CD8-positive, alpha-beta T cell (primary cell): ENCODE measurements at regions of chr13 and their contacts with region 1.

Region 1: GRCh38 chr13:60267498-60268198 is 103.9 kb upstream of the DIAPH3 start:
- DNase-seq: peak in 8 of 9 experiments; percentile 3 to 69 (median 42)
- ATAC-seq: peak; percentile 91
- H3K4me3 ChIP-seq: peak overlapping the region; percentile 65 to 67
- H3K4me3 Mint-ChIP-seq: no peak overlapping the region
- H3K27ac ChIP-seq: peak overlapping the region; percentile 41 to 62
- H3K27ac Mint-ChIP-seq: no peak overlapping the region
- H3K4me1 ChIP-seq: peaks cover 9% of the 10 kb centered on the region
- H3K4me1 Mint-ChIP-seq: peaks cover 4% of the 10 kb centered on the region
- H3K27me3 ChIP-seq: no peaks in the 10 kb centered on the region
- H3K27me3 Mint-ChIP-seq: no peaks in the 10 kb centered on the region
- CTCF ChIP-seq: no peak

Region 2: DNA sequence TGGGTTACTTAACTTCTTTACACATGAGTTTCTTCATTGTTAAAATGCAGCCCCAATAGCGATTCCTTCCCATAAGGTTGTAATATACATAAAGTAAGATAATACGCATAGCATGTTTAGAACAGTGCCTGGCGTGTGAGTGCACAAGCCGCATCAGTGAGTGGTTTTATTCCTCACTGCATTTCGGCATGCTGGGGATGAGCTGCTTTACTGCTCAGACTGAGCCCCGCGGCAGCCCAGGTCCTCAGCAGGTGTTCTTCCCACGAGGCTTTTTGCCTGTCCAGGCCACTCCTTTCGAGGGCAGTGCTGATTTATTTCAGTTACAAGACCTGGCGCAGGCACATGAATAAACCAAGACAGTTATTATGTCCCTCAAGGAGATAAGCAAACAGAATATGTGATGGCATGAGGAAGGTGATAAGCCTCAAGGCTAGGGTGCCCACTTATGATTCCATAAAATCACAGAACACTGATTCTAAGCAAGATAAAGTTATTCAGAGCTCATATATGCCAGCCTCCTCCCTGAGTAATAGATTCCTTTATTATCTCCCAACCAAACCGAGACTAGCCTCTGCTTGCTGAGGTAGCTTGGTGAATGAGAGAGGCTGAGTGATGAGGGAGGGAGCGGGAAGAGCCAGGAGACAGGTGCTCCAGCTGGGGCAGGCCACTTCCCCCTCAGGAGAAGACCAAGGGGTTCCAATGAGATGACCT is 609.5 kb before region 1 on chr13:
- CTCF ChIA-PET with region 1: no interaction called
- POLR2A ChIA-PET with region 1: no interaction called
- intact Hi-C with region 1: no loop called
- DNase-seq: no peak
- ATAC-seq: no peak
- H3K4me3 ChIP-seq: no peak overlapping the region
- H3K4me3 Mint-ChIP-seq: no peak overlapping the region
- H3K27ac ChIP-seq: no peak overlapping the region
- H3K27ac Mint-ChIP-seq: no peak overlapping the region
- H3K4me1 ChIP-seq: no peaks in the 10 kb centered on the region
- H3K4me1 Mint-ChIP-seq: no peaks in the 10 kb centered on the region
- H3K27me3 ChIP-seq: no peaks in the 10 kb centered on the region
- H3K27me3 Mint-ChIP-seq: peaks cover 4% of the 10 kb centered on the region
- CTCF ChIP-seq: no peak

Region 3: DNA sequence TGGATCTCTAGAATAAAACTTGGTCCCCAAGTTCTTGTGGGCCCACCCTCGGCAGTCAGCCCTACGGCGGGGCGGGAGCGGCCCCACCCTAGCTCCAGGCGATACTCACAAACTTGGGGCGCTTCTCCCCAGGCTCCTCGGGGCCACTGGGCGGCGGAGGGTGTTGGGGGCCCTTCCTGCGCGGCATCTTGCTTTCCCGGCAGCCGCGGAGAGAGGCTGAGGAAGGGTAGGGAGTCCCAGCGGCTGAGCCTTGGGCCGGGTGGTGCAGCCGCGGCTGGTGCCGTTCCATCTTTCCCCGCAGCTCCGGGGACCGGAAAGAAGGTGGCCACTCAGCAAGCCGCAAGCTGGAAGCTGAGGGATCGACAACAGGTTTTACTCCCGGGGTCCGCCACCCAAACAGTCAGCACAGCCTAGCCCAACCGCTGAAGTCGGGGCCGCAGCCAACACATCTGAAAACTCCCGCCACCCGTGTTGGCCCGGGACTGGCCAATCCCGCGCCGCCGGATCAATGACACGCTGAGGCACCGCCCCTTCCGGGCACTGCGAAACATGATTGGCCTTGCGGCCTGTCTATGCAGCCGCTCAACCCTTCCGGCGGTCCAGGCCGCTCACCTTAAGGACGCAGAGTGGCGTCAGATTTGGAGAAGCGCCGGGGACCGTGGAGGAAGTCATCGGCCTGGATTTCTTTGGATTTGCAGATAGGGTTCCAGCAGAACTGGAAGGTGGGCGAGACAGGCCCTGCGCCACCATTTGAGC is 104.0 kb before region 1 on chr13 and contains the start of gene DIAPH3:
- CTCF ChIA-PET with region 1: no interaction called
- POLR2A ChIA-PET with region 1: no interaction called
- intact Hi-C with region 1: loop called in 1 of 2 experiments (anchors 5 kb)
- DNase-seq: peak; percentile 84 to 94 (median 92)
- ATAC-seq: peak; percentile 99
- H3K4me3 ChIP-seq: peak within 1 kb of the TSS; percentile 77 to 95
- H3K4me3 Mint-ChIP-seq: peak within 1 kb of the TSS; percentile 95
- H3K27ac ChIP-seq: peak within 1 kb of the TSS; percentile 70 to 89
- H3K27ac Mint-ChIP-seq: peak within 1 kb of the TSS; percentile 95
- H3K4me1 ChIP-seq: peaks cover 16% of the 10 kb centered on the region
- H3K4me1 Mint-ChIP-seq: peaks cover 24% of the 10 kb centered on the region
- H3K27me3 ChIP-seq: no peaks in the 10 kb centered on the region
- H3K27me3 Mint-ChIP-seq: peaks cover 9% of the 10 kb centered on the region
- CTCF ChIP-seq: no peak
- total RNA-seq, gene DIAPH3: 0.06 to 0.11 TPM